Activated naive CD4-positive, alpha-beta T cell treated with anti-CD3 and anti-CD28 coated beads for 36 hours (primary cell): ENCODE measurements at regions of chr22 and their contacts with region 1.

Region 1: GRCh38 chr22:46762238-46763050 is at the start of gene TBC1D22A:
- DNase-seq: peak; percentile 97
- H3K4me3 Mint-ChIP-seq: peak within 1 kb of the TSS; percentile 99
- H3K27ac Mint-ChIP-seq: peak within 1 kb of the TSS; percentile 98
- H3K4me1 Mint-ChIP-seq: peaks cover 53% of the 10 kb centered on the region
- H3K27me3 Mint-ChIP-seq: no peaks in the 10 kb centered on the region
- total RNA-seq, gene TBC1D22A: 20.1 to 21.4 TPM

Region 2: GRCh38 chr22:46737976-46738646 is 24.3 kb before region 1 on chr22 and contains the start of gene CERK:
- CTCF ChIA-PET with region 1: interaction called, 23 read pairs
- intact Hi-C with region 1: loop called (anchors 1 kb)
- DNase-seq: peak; percentile 72
- H3K4me3 Mint-ChIP-seq: peak within 1 kb of the TSS; percentile 100
- H3K27ac Mint-ChIP-seq: peak within 1 kb of the TSS; percentile 99
- H3K4me1 Mint-ChIP-seq: peaks cover 40% of the 10 kb centered on the region
- H3K27me3 Mint-ChIP-seq: no peaks in the 10 kb centered on the region
- total RNA-seq, gene CERK: 32.6 to 34.9 TPM

Region 3: GRCh38 chr22:46748908-46749675 is 13.4 kb before region 1 on chr22:
- CTCF ChIA-PET with region 1: interaction called, 28 read pairs
- intact Hi-C with region 1: no loop called
- DNase-seq: peak; percentile 65
- H3K4me3 Mint-ChIP-seq: peak overlapping the region; percentile 48
- H3K27ac Mint-ChIP-seq: peak overlapping the region; percentile 32
- H3K4me1 Mint-ChIP-seq: peaks cover 22% of the 10 kb centered on the region
- H3K27me3 Mint-ChIP-seq: no peaks in the 10 kb centered on the region

Region 4: GRCh38 chr22:46774253-46774979 is 12.0 kb after region 1 on chr22:
- CTCF ChIA-PET with region 1: interaction called, 10 read pairs
- intact Hi-C with region 1: loop called (anchors 1 kb)
- DNase-seq: peak; percentile 26
- H3K4me3 Mint-ChIP-seq: peak overlapping the region; percentile 42
- H3K27ac Mint-ChIP-seq: peak overlapping the region; percentile 90
- H3K4me1 Mint-ChIP-seq: peaks cover 74% of the 10 kb centered on the region
- H3K27me3 Mint-ChIP-seq: no peaks in the 10 kb centered on the region

Region 5: DNA sequence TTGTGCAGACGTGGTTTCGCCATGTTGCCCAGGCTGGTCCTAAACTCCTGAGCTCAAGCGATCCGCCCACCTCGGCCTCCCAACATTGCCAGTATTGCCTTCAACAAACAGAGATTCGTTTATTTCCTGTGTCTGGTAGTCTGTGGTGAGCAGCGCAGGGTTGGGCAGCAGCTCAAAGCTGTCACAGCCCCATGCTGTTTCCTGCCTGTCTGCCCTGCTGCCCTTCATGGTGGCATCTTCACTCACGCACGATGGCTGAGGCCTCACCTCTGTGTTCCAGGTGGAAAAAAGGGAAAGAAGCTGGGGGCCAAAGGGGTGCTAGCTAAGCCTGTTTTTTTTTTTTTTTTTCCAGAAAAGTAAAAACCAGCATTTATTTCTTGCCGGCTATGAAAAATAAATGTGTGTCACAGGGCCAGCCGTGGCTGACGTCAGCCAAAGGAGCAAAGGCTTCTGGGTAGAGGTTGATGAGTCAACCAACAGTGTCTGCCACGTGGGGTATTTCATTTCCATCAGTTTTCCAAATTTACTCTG is 28.8 kb after region 1 on chr22:
- CTCF ChIA-PET with region 1: interaction called, 7 read pairs
- intact Hi-C with region 1: loop called (anchors 1 kb)
- DNase-seq: peak; percentile 89
- H3K4me3 Mint-ChIP-seq: peak overlapping the region; percentile 84
- H3K27ac Mint-ChIP-seq: peak overlapping the region; percentile 99
- H3K4me1 Mint-ChIP-seq: peaks cover 40% of the 10 kb centered on the region
- H3K27me3 Mint-ChIP-seq: no peaks in the 10 kb centered on the region

Region 6: DNA sequence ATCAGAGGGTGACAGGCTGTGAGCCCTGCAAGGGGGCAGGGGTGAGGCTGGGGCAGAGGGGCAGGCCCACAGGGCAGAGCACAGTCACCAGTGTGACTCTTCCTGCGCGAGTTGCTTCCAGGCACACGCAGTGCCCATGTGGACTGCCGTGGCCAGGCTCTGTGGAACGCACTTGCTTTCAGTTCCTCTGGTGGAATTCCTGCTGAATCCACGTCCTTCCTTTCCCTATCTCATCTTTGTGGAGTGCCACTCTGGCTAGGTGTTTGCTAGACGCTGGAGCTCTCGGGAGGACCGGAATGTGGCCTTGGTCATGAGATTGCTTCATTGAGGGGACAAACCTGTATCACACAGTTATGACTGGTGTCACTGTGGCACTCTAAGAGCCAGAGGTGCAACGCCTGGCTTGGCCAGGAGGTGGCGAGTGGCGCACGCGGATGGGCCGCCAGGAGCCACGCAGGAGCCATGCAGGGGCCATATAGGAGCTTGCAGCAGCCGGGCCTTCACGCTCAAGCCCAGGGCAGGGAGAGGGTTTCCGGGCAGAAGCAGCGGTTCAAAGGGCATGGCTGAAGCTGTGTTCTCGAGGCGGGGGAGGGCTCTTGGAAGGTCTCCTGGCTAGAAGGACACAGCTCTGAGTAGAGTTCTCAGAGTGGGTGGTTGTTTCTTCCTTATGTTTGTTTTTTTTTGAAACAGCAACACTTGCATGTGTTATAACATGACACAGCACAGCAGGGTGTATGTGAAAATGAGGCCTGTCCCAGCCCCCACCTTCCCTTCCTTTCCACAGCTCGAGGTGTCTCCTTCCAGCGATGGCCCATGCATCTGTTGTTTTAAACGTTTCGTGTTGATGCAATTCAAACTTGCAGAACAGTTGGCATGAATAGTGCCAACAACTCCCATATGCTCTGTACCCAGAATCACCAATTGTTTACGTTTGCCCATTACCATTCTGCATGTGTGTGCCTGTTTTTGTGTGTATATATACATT is 36.2 kb after region 1 on chr22:
- CTCF ChIA-PET with region 1: interaction called, 214 read pairs
- intact Hi-C with region 1: loop called (anchors 1 kb)
- DNase-seq: peak; percentile 80
- H3K4me3 Mint-ChIP-seq: no peak overlapping the region
- H3K27ac Mint-ChIP-seq: no peak overlapping the region
- H3K4me1 Mint-ChIP-seq: peaks cover 18% of the 10 kb centered on the region
- H3K27me3 Mint-ChIP-seq: no peaks in the 10 kb centered on the region

Region 7: DNA sequence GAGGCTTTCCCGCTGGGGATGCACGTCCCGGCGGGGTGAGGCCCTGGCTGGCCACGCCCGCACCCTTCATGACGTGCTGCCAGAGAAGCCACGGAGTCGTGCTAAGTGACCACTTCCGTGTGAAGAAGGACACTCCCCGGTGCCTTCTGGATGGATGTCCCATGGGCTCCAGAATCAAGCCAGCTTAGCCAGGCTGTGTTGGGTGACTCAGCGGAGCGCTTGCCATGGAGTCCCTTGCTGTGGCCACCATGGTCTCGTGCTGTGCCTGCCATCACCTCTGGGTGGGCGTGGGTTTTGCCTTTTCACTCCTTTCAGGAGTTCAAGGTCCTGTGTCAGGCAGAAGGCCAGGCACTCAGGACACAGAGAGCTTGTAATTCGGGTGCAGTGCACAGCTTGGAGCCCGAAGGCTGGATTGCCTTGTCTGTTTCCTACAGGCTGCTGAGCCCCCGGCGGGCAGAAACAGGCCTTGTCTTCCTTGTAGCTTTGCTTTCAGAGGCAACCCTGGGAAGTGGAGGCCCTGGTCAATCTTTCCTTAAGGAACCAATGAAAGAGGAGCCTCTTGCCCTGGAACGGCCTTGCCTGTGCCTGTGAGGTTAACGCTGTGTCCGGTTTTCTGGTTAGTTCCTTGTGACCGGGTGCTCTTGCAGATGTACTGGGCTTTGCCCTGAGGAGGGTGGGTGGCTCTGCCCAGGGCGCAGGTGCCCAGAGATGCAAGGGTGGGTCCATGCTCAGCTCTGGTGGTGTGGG is 268.6 kb after region 1 on chr22:
- CTCF ChIA-PET with region 1: no interaction called
- intact Hi-C with region 1: no loop called
- DNase-seq: no peak
- H3K4me3 Mint-ChIP-seq: no peak overlapping the region
- H3K27ac Mint-ChIP-seq: no peak overlapping the region
- H3K4me1 Mint-ChIP-seq: no peaks in the 10 kb centered on the region
- H3K27me3 Mint-ChIP-seq: no peaks in the 10 kb centered on the region